CD14-positive monocyte (primary cell): ENCODE measurements at regions of chr2 and their contacts with region 1.

Region 1: GRCh38 chr2:42513257-42513918 is 19.6 kb upstream of the KCNG3 start:
- DNase-seq: peak in 2 of 3 donors; percentile 18 to 29
- H3K4me3 ChIP-seq: no peak overlapping the region
- H3K4me3 Mint-ChIP-seq: no peak overlapping the region
- H3K27ac ChIP-seq: no peak overlapping the region
- H3K27ac Mint-ChIP-seq: no peak overlapping the region
- H3K4me1 ChIP-seq: no peaks in the 10 kb centered on the region
- H3K4me1 Mint-ChIP-seq: peaks cover 10% of the 10 kb centered on the region
- H3K27me3 ChIP-seq: peaks cover 0 to 5% of the 10 kb centered on the region in 2 donors
- H3K27me3 Mint-ChIP-seq: peaks cover 1 to 12% (median 7%) of the 10 kb centered on the region in 3 donors
- CTCF ChIP-seq: peak; percentile 73

Region 2: DNA sequence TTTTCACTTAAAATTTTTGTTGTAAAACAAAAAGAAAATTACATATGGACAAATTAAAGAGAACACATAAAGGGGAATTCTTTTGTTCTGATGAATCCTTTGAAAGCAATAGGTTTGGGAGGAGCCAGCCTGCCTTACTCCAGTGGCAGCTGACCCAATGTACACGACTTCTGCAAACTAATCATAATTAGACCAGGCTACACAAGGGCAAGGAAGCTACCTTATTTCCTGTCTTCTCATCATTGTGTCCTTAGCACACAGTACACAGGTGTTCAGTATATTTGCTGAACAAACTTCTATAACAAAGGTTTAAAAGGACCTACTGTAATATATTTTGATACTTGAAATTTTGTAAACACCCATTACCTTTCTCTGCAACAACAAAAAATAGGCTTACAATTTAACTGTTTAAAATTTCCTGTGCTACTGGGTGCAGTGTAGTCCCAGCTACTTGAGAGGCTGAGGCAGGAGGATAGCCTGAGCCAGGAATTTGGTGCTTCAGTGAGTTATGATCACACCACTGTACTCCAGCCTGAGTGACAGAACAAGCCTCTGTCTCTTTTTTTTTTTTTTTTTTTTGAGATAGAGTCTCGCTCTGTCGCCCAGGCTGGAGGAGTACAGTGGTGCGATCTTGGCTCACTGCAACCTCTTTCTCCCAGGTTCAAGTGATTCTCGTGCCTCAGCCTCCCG is 38.5 kb before region 1 on chr2:
- intact Hi-C with region 1: no loop called
- DNase-seq: no peak
- H3K4me3 ChIP-seq: no peak overlapping the region
- H3K4me3 Mint-ChIP-seq: no peak overlapping the region
- H3K27ac ChIP-seq: no peak overlapping the region
- H3K27ac Mint-ChIP-seq: no peak overlapping the region
- H3K4me1 ChIP-seq: no peaks in the 10 kb centered on the region
- H3K4me1 Mint-ChIP-seq: no peaks in the 10 kb centered on the region
- H3K27me3 ChIP-seq: no peaks in the 10 kb centered on the region
- H3K27me3 Mint-ChIP-seq: peaks cover 5 to 13% (median 8%) of the 10 kb centered on the region in 3 donors
- CTCF ChIP-seq: no peak

Region 3: GRCh38 chr2:42503291-42503690 is 10.1 kb before region 1 on chr2:
- intact Hi-C with region 1: no loop called
- DNase-seq: no peak
- H3K4me3 ChIP-seq: no peak overlapping the region
- H3K4me3 Mint-ChIP-seq: no peak overlapping the region
- H3K27ac ChIP-seq: no peak overlapping the region
- H3K27ac Mint-ChIP-seq: no peak overlapping the region
- H3K4me1 ChIP-seq: no peaks in the 10 kb centered on the region
- H3K4me1 Mint-ChIP-seq: no peaks in the 10 kb centered on the region
- H3K27me3 ChIP-seq: no peaks in the 10 kb centered on the region
- H3K27me3 Mint-ChIP-seq: peaks cover 5 to 21% (median 19%) of the 10 kb centered on the region in 3 donors
- CTCF ChIP-seq: no peak

Region 4: DNA sequence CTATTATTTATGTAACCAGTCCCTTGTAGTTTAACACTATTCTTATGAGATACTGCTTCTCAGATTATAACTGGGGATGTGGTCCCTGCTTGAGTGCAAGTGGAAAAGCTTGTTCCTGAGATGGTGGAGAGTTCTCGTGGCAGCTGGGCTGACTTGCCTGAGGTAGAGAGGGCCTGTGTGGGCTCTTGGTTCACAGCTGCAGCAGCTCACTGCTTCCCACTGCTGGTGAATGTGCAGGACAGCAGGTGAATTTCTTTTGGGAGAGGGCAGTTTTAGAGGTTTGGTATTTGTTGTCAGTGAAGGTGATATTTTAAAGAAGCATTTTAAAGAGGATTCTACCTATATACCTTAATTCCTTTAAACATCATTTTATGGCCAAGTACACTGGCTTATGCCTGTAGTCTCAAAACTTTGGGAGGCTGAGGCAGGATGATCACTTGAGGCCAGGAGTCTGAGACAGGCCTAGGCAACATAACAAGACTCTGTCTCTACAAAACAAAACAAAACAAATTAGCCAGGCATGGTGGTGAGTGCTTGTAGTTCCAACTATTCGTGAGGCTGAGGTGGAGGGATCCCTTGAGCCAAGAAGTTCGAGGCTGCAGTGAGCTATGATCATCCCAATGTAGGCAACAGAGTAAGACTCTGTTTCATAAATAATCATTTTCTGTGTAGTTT is 149.9 kb after region 1 on chr2:
- intact Hi-C with region 1: loop called in 1 of 2 experiments (anchors 5 kb)
- DNase-seq: peak; percentile 53 to 63 (median 60)
- H3K4me3 ChIP-seq: no peak overlapping the region
- H3K4me3 Mint-ChIP-seq: no peak overlapping the region
- H3K27ac ChIP-seq: no peak overlapping the region
- H3K27ac Mint-ChIP-seq: peak overlapping the region in 6 of 7 donors; percentile 23 to 81 (median 57)
- H3K4me1 ChIP-seq: peaks cover 18 to 25% of the 10 kb centered on the region in 2 donors
- H3K4me1 Mint-ChIP-seq: peaks cover 25% of the 10 kb centered on the region
- H3K27me3 ChIP-seq: no peaks in the 10 kb centered on the region
- H3K27me3 Mint-ChIP-seq: no peaks in the 10 kb centered on the region
- CTCF ChIP-seq: peak; percentile 95

Region 5: DNA sequence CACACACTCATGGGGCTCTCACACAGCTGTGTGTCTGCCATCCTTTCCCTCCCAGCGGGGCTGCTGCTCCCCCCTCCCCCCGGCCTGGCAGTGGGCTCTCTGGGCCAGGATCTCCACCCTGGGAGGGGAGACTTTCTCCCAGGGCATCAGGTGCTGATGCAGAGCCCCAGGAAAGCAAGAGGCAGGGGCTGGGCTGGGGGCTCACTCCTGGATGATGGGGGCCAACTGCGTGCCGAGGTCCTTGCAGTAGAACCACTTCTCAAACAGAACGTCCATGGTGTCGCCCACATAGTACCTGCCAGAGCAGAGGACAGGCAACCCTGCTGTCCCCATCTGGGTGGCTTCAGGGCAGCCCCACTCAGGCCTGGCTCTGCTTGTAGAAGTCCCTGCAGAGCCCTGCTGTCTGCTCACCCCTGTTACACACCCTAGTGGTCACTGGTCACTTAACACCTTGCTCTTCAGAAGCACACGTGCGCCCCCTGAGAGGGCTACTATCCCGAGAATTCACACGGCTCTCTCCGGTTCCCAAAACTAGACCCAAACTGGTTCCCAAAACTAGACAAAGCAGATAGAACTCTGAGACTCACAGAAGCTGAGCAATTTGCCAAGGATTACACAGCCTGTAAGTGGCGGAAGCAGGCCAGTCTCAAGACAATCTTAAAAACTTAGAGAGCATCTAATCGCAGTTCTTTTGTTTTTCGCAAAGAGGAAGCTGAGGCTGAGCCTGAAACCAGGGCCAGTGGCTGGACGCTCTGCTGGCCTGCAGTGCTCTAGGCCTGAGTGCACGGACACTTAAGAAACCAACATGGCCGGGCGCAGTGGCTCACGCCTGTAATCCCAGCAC is 257.1 kb after region 1 on chr2:
- intact Hi-C with region 1: loop called in 1 of 2 experiments (anchors 10 kb)
- DNase-seq: peak; percentile 69 to 80 (median 70)
- H3K4me3 ChIP-seq: peak overlapping the region in 1 of 3 experiments; percentile 51
- H3K4me3 Mint-ChIP-seq: peak overlapping the region; percentile 61 to 78
- H3K27ac ChIP-seq: peak overlapping the region; percentile 65 to 75
- H3K27ac Mint-ChIP-seq: peak overlapping the region; percentile 83 to 95 (median 91)
- H3K4me1 ChIP-seq: peaks cover 30 to 32% of the 10 kb centered on the region in 2 donors
- H3K4me1 Mint-ChIP-seq: peaks cover 27% of the 10 kb centered on the region
- H3K27me3 ChIP-seq: no peaks in the 10 kb centered on the region
- H3K27me3 Mint-ChIP-seq: peaks cover 0 to 3% (median 0%) of the 10 kb centered on the region in 3 donors
- CTCF ChIP-seq: peak; percentile 83